ENCODE measurements at regions of chr3 and their contacts with region 1.

Region 1: DNA sequence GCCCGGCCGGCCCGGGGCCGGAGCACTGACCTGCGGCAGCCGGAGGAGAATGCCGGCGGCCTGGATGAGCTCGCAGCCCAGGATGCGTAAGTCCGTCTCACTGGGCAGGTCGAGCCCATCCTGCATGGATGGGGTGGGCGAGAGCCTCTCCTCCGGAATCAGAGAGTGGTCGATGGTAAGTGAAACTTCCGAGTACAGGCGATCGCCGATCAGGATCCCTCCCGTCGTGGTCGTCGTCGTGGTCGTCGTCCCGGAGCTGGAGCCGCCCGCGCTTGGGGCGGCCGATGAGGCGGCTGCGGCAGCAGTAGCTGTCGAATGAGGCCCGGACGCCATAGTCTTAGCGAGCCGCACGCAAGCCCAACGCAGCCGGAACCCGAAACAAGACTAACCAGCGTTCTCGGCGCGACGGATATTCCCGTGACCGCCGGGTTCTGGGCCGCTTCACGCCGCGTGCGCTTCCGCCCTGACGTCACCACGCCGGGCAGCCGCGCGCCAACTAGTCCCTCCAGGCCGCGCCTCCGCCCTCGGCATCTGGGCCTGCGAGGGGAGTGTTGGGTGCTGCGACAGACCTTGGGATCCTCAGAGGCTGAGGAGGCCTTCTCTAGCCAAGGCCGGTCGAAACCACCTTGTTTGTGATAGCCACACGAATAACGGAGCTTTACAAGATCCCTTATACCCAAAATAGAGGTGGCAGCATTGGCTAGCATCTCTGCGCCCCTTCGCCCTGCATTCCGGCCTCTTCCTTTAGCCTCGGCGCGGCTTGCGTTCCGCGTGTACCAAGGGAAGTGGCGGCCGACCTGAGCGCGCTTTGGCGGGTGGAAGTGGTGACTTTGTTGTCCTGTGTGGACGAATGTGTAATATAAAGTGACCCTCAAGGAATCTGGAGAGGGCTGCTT is at the start of gene CCNL1:
- DNase-seq: peak; percentile 96
- ATAC-seq: peak; percentile 78
- H3K4me3 Mint-ChIP-seq: peak within 1 kb of the TSS; percentile 99
- H3K27ac Mint-ChIP-seq: peak within 1 kb of the TSS; percentile 98
- H3K4me1 Mint-ChIP-seq: peaks cover 59% of the 10 kb centered on the region
- H3K27me3 Mint-ChIP-seq: no peaks in the 10 kb centered on the region
- CTCF ChIP-seq: no peak
- total RNA-seq, gene CCNL1: 184 and 222 TPM in 2 replicates

Region 2: GRCh38 chr3:156483961-156484787 is 675.8 kb before region 1 on chr3:
- CTCF ChIA-PET with region 1: no interaction called
- POLR2A ChIA-PET with region 1: interaction called, 3 read pairs
- intact Hi-C with region 1: loop called (anchors 1 kb)
- DNase-seq: peak; percentile 20
- ATAC-seq: peak; percentile 81
- H3K4me3 Mint-ChIP-seq: peak overlapping the region; percentile 79
- H3K27ac Mint-ChIP-seq: peak overlapping the region; percentile 93
- H3K4me1 Mint-ChIP-seq: peaks cover 32% of the 10 kb centered on the region
- H3K27me3 Mint-ChIP-seq: peaks cover under 1% of the 10 kb centered on the region
- CTCF ChIP-seq: no peak

Region 3: DNA sequence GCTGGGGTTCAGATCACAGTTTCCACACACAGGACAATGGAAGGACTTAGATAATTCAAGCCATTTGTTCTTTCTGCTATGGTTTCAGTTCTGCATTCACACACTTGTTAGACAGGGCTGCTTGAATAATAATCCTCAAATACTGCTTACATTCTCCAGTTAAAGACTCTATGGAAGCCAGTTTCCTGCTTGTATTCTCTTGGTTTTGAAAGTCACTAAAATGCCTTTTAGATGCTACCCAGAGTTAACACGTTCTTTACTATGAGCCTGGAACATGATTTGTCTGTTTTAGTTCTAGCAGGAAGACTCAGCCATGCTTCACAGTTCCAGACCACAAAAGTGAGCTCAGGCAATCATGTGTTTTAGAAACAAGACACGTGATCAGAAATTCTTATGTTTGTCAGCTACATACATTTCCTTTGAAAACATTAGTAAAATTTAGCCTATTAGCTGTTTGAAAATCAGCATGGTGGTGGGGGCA is 181.5 kb before region 1 on chr3:
- CTCF ChIA-PET with region 1: no interaction called
- POLR2A ChIA-PET with region 1: no interaction called
- intact Hi-C with region 1: loop called (anchors 2 kb)
- DNase-seq: no peak
- ATAC-seq: peak; percentile 90
- H3K4me3 Mint-ChIP-seq: peak overlapping the region; percentile 61
- H3K27ac Mint-ChIP-seq: peak overlapping the region; percentile 95
- H3K4me1 Mint-ChIP-seq: peaks cover 51% of the 10 kb centered on the region
- H3K27me3 Mint-ChIP-seq: no peaks in the 10 kb centered on the region
- CTCF ChIP-seq: no peak

Region 4: DNA sequence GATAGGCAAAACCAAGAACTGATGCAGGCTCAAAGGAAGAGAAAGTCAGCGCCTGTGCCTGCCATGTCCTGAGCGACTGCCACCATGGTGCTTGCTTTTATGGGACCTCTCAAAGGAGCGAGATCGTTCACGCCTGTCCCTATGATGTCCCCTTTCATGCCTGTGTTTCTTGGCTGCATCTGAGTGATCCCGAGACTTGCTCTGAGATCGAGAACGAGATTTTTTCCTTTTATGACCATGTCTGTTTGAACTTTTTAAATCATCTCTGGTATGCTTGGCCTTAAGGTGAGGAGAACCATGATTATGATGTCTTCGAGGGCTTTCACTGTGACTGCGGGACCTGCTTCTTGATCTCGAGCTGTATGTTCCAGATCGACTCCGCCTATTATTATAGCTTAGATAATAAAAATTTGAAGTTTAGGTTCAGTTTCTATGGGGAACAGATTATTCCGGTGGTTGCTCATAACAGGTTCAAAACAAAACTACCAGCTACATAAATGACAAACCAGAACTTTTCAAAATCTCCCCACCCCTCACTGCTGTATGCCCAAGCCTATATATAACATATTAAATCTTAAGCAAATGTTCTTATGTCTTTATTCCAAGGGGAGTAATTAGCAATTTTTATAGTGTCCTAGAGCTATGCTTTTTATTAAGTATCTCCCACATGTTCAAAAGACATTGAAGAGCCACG is 11.7 kb before region 1 on chr3:
- CTCF ChIA-PET with region 1: no interaction called
- POLR2A ChIA-PET with region 1: interaction called, 22 read pairs
- intact Hi-C with region 1: loop called (anchors 1 kb)
- DNase-seq: no peak
- ATAC-seq: no peak
- H3K4me3 Mint-ChIP-seq: no peak overlapping the region
- H3K27ac Mint-ChIP-seq: peak overlapping the region; percentile 37
- H3K4me1 Mint-ChIP-seq: peaks cover 4% of the 10 kb centered on the region
- H3K27me3 Mint-ChIP-seq: no peaks in the 10 kb centered on the region
- CTCF ChIP-seq: no peak

Region 5: DNA sequence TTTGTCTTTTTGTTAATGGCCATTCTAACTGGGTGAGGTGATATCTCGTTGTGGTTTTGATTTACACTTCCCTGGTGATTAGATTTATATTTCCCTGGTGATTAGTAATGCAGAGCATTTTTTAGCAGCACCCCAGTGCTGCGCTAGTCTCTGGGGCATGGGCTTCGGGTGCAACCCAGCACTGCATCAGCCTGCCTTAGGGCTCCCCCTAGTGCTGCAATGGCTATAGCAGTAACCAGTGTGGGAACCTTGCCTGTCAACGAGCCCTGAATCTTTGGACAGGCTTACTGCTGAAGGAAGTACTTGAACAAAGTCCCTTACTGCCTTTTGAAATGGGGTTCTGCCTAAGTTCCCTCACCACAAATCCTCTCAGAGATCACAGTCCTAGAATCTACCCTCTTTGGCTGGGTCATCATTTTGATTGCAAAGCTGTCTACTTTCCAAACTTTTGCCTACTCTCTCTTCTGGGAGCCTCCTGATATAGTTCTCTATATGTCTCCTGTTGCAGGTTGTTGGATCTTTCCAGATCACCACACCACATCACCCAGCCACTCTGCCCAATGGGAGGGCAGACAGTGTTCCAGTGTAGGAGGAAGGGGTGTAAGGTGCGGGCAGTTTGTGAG is 79.2 kb after region 1 on chr3:
- CTCF ChIA-PET with region 1: no interaction called
- POLR2A ChIA-PET with region 1: interaction called, 9 read pairs
- intact Hi-C with region 1: loop called (anchors 1 kb)
- DNase-seq: peak; percentile 18
- ATAC-seq: peak; percentile 91
- H3K4me3 Mint-ChIP-seq: no peak overlapping the region
- H3K27ac Mint-ChIP-seq: no peak overlapping the region
- H3K4me1 Mint-ChIP-seq: peaks cover 2% of the 10 kb centered on the region
- H3K27me3 Mint-ChIP-seq: no peaks in the 10 kb centered on the region
- CTCF ChIP-seq: peak; percentile 60

Measured in activated B cell treated with CpG ODN at 0.5 μM for 24 hours (primary cell).